Gastrocnemius medialis (tissue), 4 donors: ENCODE measurements at regions of chr13 and their contacts with region 1.

Region 1: GRCh38 chr13:31431722-31432137 is 232.0 kb downstream of the B3GLCT start:
- DNase-seq: peak in 1 of 2 donors; percentile 36
- ATAC-seq: no peak
- H3K4me3 ChIP-seq: no peak overlapping the region
- H3K27ac ChIP-seq: no peak overlapping the region
- H3K4me1 ChIP-seq: no peaks in the 10 kb centered on the region
- H3K27me3 ChIP-seq: no peaks in the 10 kb centered on the region
- CTCF ChIP-seq: peak in 4 of 5 experiments; percentile 12 to 76 (median 56)
- POLR2A ChIP-seq: no peak

Region 2: DNA sequence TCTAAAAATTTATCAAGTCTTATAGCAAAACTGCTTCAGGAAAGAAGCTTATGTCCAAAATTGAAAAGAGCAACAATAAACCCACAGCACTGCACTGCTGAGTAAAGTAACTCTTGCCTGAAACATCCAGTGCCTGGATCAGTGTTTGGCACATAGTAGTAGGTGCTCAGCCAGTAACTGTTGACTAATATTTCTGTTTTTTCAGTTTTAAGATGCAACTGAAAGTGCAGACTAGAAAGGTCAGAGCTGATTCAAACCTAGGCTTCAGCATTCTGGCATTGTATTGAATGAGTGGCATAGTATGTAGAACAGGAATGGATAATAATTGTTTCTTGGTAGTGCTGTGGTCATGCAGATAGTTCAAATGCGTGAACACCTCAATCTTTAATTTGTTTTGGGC is 1648.9 kb before region 1 on chr13:
- in situ Hi-C with region 1: no loop called
- intact Hi-C with region 1: no loop called
- DNase-seq: no peak
- ATAC-seq: no peak
- H3K4me3 ChIP-seq: no peak overlapping the region
- H3K27ac ChIP-seq: no peak overlapping the region
- H3K4me1 ChIP-seq: peaks cover 18 to 23% of the 10 kb centered on the region in 2 donors
- H3K27me3 ChIP-seq: no peaks in the 10 kb centered on the region
- CTCF ChIP-seq: no peak
- POLR2A ChIP-seq: no peak

Region 3: DNA sequence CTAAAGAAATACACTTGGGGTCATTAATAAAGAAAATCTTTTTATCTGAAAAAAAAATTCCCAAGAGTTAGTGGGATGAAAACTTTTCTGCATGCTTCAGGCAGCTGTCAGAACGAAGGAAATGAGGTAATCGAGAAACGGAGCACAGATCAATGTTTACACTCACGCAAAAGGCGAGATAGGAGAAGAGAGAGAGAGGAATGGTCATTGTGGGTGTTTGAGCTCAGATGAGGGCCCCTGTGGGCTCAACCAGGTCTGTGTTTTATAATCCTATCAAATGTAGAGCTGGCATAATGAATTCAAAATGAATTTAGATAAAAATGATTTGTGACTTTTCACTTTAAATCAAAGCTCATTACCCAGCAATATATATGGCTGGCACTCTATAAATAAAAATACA is 301.3 kb after region 1 on chr13:
- in situ Hi-C with region 1: loop called (anchors 5 to 25 kb)
- intact Hi-C with region 1: no loop called
- DNase-seq: no peak
- ATAC-seq: no peak
- H3K4me3 ChIP-seq: peak overlapping the region in 2 of 4 donors; percentile 14 to 24
- H3K27ac ChIP-seq: no peak overlapping the region
- H3K4me1 ChIP-seq: no peaks in the 10 kb centered on the region
- H3K27me3 ChIP-seq: no peaks in the 10 kb centered on the region
- CTCF ChIP-seq: no peak
- POLR2A ChIP-seq: no peak

Region 4: GRCh38 chr13:31742097-31742734 is 310.5 kb after region 1 on chr13:
- in situ Hi-C with region 1: loop called (anchors 5 to 25 kb)
- intact Hi-C with region 1: loop called (anchors 5 kb)
- DNase-seq: peak; percentile 20 to 34
- ATAC-seq: peak in 1 of 2 donors; percentile 71
- H3K4me3 ChIP-seq: no peak overlapping the region
- H3K27ac ChIP-seq: no peak overlapping the region
- H3K4me1 ChIP-seq: no peaks in the 10 kb centered on the region
- H3K27me3 ChIP-seq: no peaks in the 10 kb centered on the region
- CTCF ChIP-seq: peak; percentile 58 to 97 (median 80)
- POLR2A ChIP-seq: no peak

Region 5: GRCh38 chr13:31797154-31797775 is 365.5 kb after region 1 on chr13:
- in situ Hi-C with region 1: loop called in 1 of 4 experiments (anchors 5 kb)
- intact Hi-C with region 1: loop called (anchors 10 kb)
- DNase-seq: no peak
- ATAC-seq: no peak
- H3K4me3 ChIP-seq: no peak overlapping the region
- H3K27ac ChIP-seq: no peak overlapping the region
- H3K4me1 ChIP-seq: no peaks in the 10 kb centered on the region
- H3K27me3 ChIP-seq: no peaks in the 10 kb centered on the region
- CTCF ChIP-seq: peak in 2 of 5 experiments; percentile 7
- POLR2A ChIP-seq: no peak

Region 6: DNA sequence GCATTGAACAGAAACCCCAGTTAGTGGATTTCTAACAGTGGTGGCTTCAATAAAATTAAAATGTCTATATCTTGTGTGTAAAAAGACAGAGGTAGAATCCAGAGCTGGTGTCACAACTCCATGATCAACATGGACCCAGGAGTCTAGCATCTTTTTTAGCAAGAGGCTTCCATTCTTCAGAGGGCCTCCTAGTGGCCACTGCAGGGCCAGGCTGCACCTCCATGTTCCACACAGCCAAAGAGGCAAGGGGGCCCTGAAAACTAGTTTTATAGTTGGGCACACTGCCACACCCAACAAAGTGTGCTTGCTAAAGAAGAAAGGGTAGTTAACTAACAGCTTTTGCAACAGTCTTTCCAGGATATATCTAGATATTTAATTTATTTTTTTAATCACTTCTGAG is 983.3 kb after region 1 on chr13:
- in situ Hi-C with region 1: no loop called
- intact Hi-C with region 1: no loop called
- DNase-seq: no peak
- ATAC-seq: no peak
- H3K4me3 ChIP-seq: no peak overlapping the region
- H3K27ac ChIP-seq: no peak overlapping the region
- H3K4me1 ChIP-seq: no peaks in the 10 kb centered on the region
- H3K27me3 ChIP-seq: no peaks in the 10 kb centered on the region
- CTCF ChIP-seq: peak in 1 of 5 experiments; percentile 32
- POLR2A ChIP-seq: no peak